Activated CD4-positive, alpha-beta memory T cell treated with anti-CD3 and anti-CD28 coated beads, Interleukin-2, amount 10 ng/mL, durations not matched to agents 7 days and 5 days (primary cell): ENCODE measurements at regions of chr5 and their contacts with region 1.

Region 1: DNA sequence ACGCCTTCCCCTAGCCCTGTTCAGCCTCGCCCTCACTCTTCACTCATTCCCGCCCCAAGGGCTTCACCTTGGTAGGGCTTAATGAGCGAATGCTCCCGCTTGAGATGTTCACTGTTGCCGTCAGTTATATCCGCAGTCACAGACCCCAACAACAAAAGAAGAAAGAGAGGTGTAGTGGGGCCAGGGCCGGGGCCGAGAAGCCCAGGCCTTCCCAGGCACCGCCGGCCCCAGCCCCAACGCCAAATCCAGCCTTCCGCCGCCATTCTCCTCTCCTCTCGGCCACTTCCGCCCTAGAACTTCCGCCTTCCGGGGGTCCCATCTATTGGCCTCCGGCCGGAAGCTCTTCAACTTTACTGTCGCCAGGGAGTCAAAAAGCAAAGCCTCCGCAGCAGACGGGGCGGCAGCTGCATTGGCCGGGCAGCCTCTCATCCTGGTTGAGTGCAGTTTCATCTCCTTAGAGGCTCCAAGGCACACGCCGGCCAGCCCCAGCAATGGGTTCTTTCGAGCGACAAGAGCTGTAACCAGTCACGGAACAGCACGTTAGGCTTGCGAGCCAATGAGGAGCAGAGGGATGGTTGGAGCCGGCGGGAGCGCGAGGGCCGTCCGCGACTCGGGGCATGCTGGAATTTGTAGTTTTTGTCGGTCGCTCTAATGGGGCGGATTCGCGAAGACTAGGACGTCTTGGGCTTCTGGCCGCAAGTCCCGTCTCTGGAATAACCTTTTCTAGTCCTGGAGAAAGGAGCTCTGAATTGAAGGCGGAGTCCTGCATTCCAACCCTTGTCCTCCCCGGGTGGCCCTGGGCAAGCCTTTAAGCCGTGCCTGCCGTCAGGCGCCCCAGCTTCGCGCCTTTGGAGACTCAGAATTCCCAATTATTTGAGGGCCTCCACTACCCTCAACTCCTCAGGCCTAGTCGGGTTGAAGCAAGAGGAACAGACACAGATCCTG is at the start of gene LMAN2:
- DNase-seq: peak; percentile 94
- H3K4me3 Mint-ChIP-seq: peak within 1 kb of the TSS; percentile 90
- H3K27ac Mint-ChIP-seq: peak within 1 kb of the TSS; percentile 99
- H3K4me1 Mint-ChIP-seq: peaks cover 70% of the 10 kb centered on the region
- H3K27me3 Mint-ChIP-seq: no peaks in the 10 kb centered on the region
- total RNA-seq, gene LMAN2: 145 to 149 TPM

Region 2: DNA sequence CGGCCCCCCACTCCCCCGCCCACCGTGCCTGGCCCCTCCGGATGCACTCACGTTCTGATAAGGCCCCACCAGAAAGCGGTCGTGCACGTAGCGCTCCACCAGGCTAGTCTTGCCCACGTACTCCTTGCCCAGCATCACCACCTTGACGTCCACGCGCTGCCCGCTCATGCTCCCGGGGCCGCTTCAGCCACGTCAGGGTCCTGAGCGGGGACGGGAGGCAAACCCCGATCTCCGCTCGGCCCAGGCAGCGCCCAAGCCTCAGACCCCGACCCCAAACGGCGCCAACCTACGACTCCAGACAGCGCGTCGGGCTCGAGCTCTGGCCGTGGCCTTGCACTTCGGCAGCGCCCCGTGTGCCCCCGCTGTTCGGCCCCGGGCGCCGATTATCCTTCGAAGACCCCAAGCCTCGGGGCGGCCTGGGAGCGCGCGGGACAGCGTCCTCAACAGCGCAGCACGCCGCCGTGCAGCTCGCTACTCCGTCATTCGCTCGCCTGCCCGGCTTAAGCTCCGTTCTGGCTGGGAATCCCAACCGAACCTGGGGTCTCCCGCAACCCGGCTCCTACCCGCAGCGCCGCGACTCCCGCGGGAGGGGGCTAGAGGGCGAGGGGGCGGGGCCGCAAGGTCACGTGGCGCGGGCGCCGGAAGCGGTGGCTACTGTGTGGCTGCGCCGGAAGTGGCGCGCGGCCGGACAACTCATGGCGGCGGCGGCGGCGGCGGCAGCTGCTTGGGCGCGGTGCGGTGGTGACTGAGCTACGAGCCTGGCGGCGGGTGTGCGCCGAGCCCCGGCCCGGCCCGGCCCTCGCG is 48.3 kb before region 1 on chr5 and contains the starts of genes PRELID1 and RAB24:
- CTCF ChIA-PET with region 1: interaction called, 19 read pairs
- POLR2A ChIA-PET with region 1: interaction called, 18 read pairs
- DNase-seq: peak; percentile 92
- H3K4me3 Mint-ChIP-seq: peak within 1 kb of the TSS; percentile 89
- H3K27ac Mint-ChIP-seq: peak within 1 kb of the TSS; percentile 92
- H3K4me1 Mint-ChIP-seq: peaks cover 74% of the 10 kb centered on the region
- H3K27me3 Mint-ChIP-seq: no peaks in the 10 kb centered on the region
- total RNA-seq, gene PRELID1: 153 to 156 TPM
- total RNA-seq, gene RAB24: 43.0 to 46.6 TPM

Region 3: GRCh38 chr5:177370488-177371119 is 18.9 kb after region 1 on chr5:
- CTCF ChIA-PET with region 1: interaction called, 11 read pairs
- POLR2A ChIA-PET with region 1: interaction called, 62 read pairs
- DNase-seq: peak; percentile 79
- H3K4me3 Mint-ChIP-seq: peak overlapping the region; percentile 72
- H3K27ac Mint-ChIP-seq: peak overlapping the region; percentile 56
- H3K4me1 Mint-ChIP-seq: peaks cover 70% of the 10 kb centered on the region
- H3K27me3 Mint-ChIP-seq: no peaks in the 10 kb centered on the region

Region 4: GRCh38 chr5:177425801-177426565 is 74.3 kb after region 1 on chr5:
- CTCF ChIA-PET with region 1: no interaction called
- POLR2A ChIA-PET with region 1: interaction called, 23 read pairs
- DNase-seq: peak; percentile 100
- H3K4me3 Mint-ChIP-seq: peak overlapping the region; percentile 95
- H3K27ac Mint-ChIP-seq: peak overlapping the region; percentile 98
- H3K4me1 Mint-ChIP-seq: peaks cover 44% of the 10 kb centered on the region
- H3K27me3 Mint-ChIP-seq: no peaks in the 10 kb centered on the region

Region 5: GRCh38 chr5:177454397-177455035 is 102.9 kb after region 1 on chr5:
- CTCF ChIA-PET with region 1: interaction called, 11 read pairs
- POLR2A ChIA-PET with region 1: interaction called, 8 read pairs
- DNase-seq: peak; percentile 94
- H3K4me3 Mint-ChIP-seq: peak overlapping the region; percentile 79
- H3K27ac Mint-ChIP-seq: no peak overlapping the region
- H3K4me1 Mint-ChIP-seq: peaks cover 27% of the 10 kb centered on the region
- H3K27me3 Mint-ChIP-seq: peaks cover 17% of the 10 kb centered on the region